K562 (cell line): ENCODE measurements at regions of chr3 and their contacts with region 1.

Region 1: GRCh38 chr3:47824541-47825473 is 21.9 kb downstream of the DHX30 start:
- DNase-seq: peak; percentile 93 to 98 (median 96)
- ATAC-seq: peak; percentile 99
- H3K4me3 ChIP-seq: peak overlapping the region; percentile 90
- H3K27ac ChIP-seq: peak overlapping the region; percentile 92
- H3K4me1 ChIP-seq: peaks cover 14 to 18% of the 10 kb centered on the region in 2 experiments; a peak in 4 of 5 replicates
- H3K27me3 ChIP-seq: no peaks in the 10 kb centered on the region
- CTCF ChIP-seq: peak; percentile 90 to 94 (median 90)
- EP300 ChIP-seq: no peak
- POLR2A ChIP-seq: peak; percentile 94
- RAD21 ChIP-seq: peak; percentile 64 to 68

Region 2: GRCh38 chr3:47802734-47803477 is 21.9 kb before region 1 on chr3 and contains the start of gene DHX30:
- CTCF ChIA-PET with region 1: interaction called, 3 read pairs
- POLR2A ChIA-PET with region 1: interaction called, 10 read pairs
- in situ Hi-C with region 1: no loop called
- intact Hi-C with region 1: loop called (anchors 2 kb)
- DNase-seq: peak; percentile 94 to 98 (median 96)
- ATAC-seq: peak; percentile 97
- H3K4me3 ChIP-seq: peak within 1 kb of the TSS; percentile 98
- H3K27ac ChIP-seq: peak within 1 kb of the TSS; percentile 86
- H3K4me1 ChIP-seq: peaks cover 9 to 12% of the 10 kb centered on the region in 2 experiments; a peak in 4 of 5 replicates
- H3K27me3 ChIP-seq: no peaks in the 10 kb centered on the region
- CTCF ChIP-seq: no peak
- EP300 ChIP-seq: no peak
- POLR2A ChIP-seq: peak; percentile 75
- RAD21 ChIP-seq: no peak
- polyA plus RNA-seq, gene DHX30: 12.3 to 14.2 TPM

Region 3: DNA sequence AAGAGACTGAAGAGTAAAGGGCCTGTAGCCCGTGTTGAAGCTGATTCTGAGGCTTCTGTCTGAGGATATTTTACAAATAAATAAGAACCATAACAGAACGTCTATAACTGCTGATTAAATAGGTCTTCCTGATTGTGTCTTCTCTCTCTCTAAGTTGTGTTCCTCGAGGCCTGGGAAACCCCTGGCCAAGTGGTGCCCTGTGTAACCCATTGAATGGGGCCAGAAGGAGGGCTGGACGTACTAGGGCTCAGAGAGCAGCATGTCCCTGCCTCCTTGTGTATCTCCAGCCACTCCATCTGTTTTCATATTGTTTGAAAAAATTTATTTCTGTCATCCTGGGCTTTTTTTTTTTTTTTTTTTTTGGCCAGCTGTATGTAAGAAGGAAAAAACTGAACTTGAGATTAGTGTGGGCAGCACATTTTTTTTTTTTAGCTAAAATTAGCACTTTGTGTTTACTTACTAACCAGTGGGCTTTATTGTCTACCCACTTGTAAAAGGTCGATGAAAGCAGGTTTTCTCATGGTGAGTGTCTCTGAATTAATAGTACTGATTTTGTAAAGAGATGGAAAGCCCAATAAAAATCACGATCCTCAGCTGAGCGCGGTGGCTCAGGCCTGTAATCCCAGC is 11.1 kb before region 1 on chr3:
- CTCF ChIA-PET with region 1: no interaction called
- POLR2A ChIA-PET with region 1: interaction called, 29 read pairs
- in situ Hi-C with region 1: no loop called
- intact Hi-C with region 1: no loop called
- DNase-seq: no peak
- ATAC-seq: peak; percentile 24; the same call in 1 of the 3 replicates
- H3K4me3 ChIP-seq: no peak overlapping the region
- H3K27ac ChIP-seq: no peak overlapping the region
- H3K4me1 ChIP-seq: no peaks in the 10 kb centered on the region
- H3K27me3 ChIP-seq: no peaks in the 10 kb centered on the region
- CTCF ChIP-seq: no peak
- EP300 ChIP-seq: no peak
- POLR2A ChIP-seq: no peak
- RAD21 ChIP-seq: no peak

Region 4: GRCh38 chr3:47836986-47837385 is 12.2 kb after region 1 on chr3:
- CTCF ChIA-PET with region 1: no interaction called
- POLR2A ChIA-PET with region 1: interaction called, 54 read pairs
- in situ Hi-C with region 1: no loop called
- intact Hi-C with region 1: no loop called
- DNase-seq: no peak
- ATAC-seq: peak; percentile 8; the same call in 2 of the 3 replicates
- H3K4me3 ChIP-seq: no peak overlapping the region
- H3K27ac ChIP-seq: no peak overlapping the region
- H3K4me1 ChIP-seq: no peaks in the 10 kb centered on the region
- H3K27me3 ChIP-seq: no peaks in the 10 kb centered on the region
- CTCF ChIP-seq: no peak
- EP300 ChIP-seq: no peak
- POLR2A ChIP-seq: no peak
- RAD21 ChIP-seq: no peak

Region 5: GRCh38 chr3:47849699-47850563 is 25.1 kb after region 1 on chr3:
- CTCF ChIA-PET with region 1: no interaction called
- POLR2A ChIA-PET with region 1: interaction called, 18 read pairs
- in situ Hi-C with region 1: no loop called
- intact Hi-C with region 1: no loop called
- DNase-seq: peak in 2 of 4 experiments; percentile 46 to 60
- ATAC-seq: peak; percentile 85
- H3K4me3 ChIP-seq: no peak overlapping the region
- H3K27ac ChIP-seq: no peak overlapping the region
- H3K4me1 ChIP-seq: peaks cover 0 to 30% of the 10 kb centered on the region in 2 experiments; a peak in 1 of 5 replicates
- H3K27me3 ChIP-seq: no peaks in the 10 kb centered on the region
- CTCF ChIP-seq: peak; percentile 67 to 80 (median 68)
- EP300 ChIP-seq: no peak
- POLR2A ChIP-seq: no peak
- RAD21 ChIP-seq: peak in 1 of 2 experiments; percentile 44; a peak in 2 of 4 replicates

Region 6: DNA sequence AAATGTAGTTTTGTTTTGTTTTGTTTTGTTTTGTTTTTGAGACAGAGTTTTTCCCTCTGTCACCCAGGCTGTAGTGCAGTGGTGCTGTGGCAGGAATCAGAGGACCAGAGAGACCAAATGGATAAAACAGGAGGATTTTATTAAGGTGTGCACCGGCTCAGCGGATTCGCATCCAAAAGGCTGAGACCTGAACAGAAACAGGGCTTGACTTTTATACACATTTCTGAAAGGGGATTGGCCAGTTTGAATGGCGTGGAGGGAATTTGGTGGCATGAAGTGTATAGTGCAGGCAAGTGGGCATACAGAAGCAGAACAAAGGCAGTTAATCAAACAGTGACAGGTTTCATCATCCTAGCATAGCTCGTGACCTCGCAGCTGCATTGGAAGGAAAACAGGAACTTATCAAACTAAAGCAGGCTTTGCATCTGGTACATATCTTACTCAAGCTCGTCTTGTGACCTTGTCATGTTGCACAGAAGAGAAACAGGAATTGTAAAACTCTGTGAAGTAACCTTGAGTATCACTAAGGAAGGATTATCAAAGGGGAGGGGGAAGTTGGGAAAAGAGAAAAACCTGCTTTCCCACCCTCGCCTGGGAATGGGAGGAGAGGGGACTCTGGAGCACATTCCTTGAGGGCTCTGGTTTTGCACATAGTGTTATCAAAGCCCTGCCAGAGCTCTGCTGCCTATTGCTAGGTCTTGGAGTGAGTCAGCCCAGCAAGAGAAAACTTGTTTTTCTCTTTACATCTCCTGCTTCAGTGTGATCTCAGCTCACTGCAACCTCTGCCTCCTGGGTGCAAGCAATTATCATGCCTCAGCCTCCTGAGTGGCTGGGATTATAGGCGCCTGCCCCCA is 1413.7 kb after region 1 on chr3:
- CTCF ChIA-PET with region 1: no interaction called
- POLR2A ChIA-PET with region 1: no interaction called
- in situ Hi-C with region 1: loop called (anchors 25 kb)
- intact Hi-C with region 1: no loop called
- DNase-seq: peak; percentile 48 to 88 (median 62)
- ATAC-seq: peak; percentile 96
- H3K4me3 ChIP-seq: no peak overlapping the region
- H3K27ac ChIP-seq: peak overlapping the region; percentile 93
- H3K4me1 ChIP-seq: peaks cover 7 to 11% of the 10 kb centered on the region in 2 experiments; a peak in 4 of 5 replicates
- H3K27me3 ChIP-seq: no peaks in the 10 kb centered on the region
- CTCF ChIP-seq: no peak
- EP300 ChIP-seq: peak; percentile 95
- POLR2A ChIP-seq: no peak
- RAD21 ChIP-seq: peak in 1 of 2 experiments; percentile 16; a peak in 1 of 4 replicates